ENCODE measurements at regions of chr5 and their contacts with region 1.

Region 1: DNA sequence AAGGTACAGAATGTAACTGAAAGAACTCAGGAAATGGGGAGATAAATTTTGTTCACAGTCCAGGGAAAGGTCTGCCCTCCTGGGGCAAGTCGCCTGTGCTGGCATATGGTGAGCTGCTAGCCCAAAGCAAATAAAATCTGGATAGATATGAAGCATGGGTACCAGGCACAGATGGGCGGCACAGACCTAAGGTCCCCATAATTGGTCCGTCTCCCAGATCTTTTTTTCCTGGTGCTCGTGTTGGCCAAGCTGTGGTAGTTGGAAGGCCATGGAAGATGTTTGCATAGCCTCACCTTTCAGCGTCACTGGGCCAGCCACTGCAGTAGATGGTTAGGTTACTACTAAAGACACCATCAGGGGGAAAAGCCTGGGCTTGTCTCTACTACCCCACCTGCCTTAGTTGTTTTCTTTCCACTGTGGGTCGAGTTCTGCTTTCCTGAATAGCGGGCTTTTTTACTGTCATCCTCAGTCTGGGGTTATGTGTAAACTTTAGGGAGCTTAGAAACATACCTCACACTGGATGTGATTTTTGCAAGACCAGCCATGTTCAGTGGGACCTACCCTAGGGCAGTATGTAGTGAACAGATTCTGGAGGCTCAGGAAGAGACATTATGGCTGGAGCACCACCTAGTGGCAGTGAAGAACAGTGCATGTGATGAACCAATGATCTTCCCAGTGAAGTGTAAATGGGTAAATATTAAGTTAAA is 24.2 kb upstream of the GLRX start:
- DNase-seq: peak in 1 of 2 donors; percentile 62
- ATAC-seq: peak; percentile 74

Region 2: GRCh38 chr5:95152535-95152934 is 694.2 kb before region 1 on chr5:
- intact Hi-C with region 1: no loop called
- DNase-seq: no peak
- ATAC-seq: no peak

Region 3: GRCh38 chr5:95664204-95664786 is 182.4 kb before region 1 on chr5:
- intact Hi-C with region 1: loop called in 1 of 2 experiments (anchors 5 kb)
- DNase-seq: peak in 1 of 2 donors; percentile 44
- ATAC-seq: no peak

Region 4: DNA sequence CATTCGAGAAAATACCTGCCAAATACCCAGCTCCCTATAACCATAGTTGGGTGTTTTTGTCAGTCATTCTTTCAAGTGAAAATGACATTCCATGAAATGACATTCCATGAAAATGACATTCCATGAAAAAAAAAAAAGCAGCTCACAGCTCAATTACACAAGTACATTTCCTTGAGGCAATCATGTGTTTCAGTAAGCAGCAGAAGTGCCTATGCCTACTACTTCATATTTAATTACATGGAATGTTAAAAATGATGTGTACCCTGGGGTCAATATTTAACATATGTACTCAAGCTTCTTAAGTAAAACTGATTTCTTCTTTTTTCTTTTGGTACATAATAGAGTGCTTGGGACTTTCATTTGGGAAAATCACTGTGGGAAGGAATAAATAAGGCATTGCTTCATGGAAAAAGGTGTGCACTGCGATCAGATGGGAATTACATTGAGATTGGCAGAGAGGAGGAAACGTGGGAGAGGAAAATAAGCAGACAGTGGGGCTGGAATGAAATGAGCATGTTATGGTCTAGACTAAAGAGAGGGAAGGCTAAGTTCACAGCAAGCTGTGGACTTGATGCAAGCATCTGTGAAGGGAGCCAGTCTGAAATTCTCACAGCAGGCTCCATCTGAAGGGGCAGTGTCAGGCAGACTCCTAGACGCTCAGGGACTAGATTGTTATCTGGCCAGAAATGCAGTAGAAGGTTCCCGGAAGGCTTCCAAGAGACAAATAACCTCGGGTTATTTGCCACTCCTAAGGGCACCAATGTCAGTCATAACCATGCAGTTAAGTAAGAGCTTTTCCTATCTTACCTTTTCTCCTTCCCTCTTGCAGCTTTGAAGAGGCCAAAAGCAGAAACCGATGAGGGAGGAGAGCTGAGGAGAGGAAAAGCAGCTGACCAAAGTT is 148.7 kb before region 1 on chr5:
- intact Hi-C with region 1: no loop called
- DNase-seq: no peak
- ATAC-seq: peak; percentile 92

Region 5: GRCh38 chr5:95781101-95781583 is 65.6 kb before region 1 on chr5:
- intact Hi-C with region 1: loop called (anchors 2 to 10 kb)
- DNase-seq: peak; percentile 79 to 85
- ATAC-seq: peak; percentile 93

Region 6: DNA sequence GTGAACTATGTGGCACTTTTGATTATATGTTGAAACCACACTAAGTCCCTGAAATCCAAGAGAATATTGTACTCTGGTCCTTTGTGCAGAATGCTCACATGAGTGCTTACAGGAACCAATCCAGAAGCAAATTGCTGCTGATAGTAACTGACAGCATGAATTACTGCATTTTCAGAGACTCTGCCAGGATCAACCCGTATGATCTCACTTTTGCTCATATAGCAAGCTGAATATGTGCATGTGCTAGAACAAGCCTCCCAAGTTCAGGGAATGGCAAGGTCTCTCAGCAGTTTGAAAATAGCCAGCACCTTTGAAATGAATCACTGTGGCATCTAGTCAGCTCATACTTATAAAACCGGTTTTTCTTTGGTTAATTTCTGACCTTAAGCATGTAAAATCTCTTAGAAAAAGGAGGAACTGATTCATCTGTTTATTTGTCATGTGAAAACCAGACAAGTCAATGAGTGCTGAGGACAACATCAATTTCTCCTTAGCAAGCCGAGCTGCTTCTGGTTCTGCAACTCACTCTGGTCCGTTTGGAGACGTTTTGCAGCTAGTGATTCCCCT is 330.7 kb after region 1 on chr5:
- intact Hi-C with region 1: no loop called
- DNase-seq: no peak
- ATAC-seq: peak; percentile 83

Region 7: GRCh38 chr5:96909003-96909402 is 1062.3 kb after region 1 on chr5:
- intact Hi-C with region 1: no loop called
- DNase-seq: no peak
- ATAC-seq: no peak